ENCODE measurements at regions of chr4 and their contacts with region 1.

Region 1: GRCh38 chr4:123396307-123397143 is at the start of gene SPRY1:
- DNase-seq: peak; percentile 94
- H3K4me3 ChIP-seq: peak within 1 kb of the TSS; percentile 56 to 79 (median 64)
- H3K27ac ChIP-seq: peak within 1 kb of the TSS; percentile 59
- H3K4me1 ChIP-seq: peaks cover 5% of the 10 kb centered on the region
- H3K27me3 ChIP-seq: no peaks in the 10 kb centered on the region
- CTCF ChIP-seq: no peak
- total RNA-seq, gene SPRY1: 4.8 to 8.2 TPM

Region 2: DNA sequence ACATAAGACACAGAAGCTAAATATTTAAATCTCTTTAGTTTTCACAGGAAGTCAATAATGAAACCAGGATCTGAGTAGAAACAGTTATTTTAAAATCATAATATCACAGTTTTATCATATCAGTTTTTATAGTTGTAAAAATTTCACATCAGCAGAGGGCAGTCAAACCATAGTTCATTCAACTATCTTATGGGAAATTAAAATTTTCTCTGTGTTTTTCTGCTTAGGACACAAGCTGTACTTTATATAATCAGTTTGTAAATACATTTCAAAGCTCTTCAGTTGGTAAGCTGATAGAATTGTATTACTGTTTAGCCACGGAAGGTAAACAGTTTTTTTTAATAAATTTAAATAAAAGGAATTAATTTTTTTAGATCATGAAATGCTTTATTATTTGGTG is 269.3 kb before region 1 on chr4:
- CTCF ChIA-PET with region 1: interaction called, 3 read pairs
- dilution Hi-C with region 1: no loop called
- in situ Hi-C with region 1: loop called in 1 of 2 experiments (anchors 25 kb)
- intact Hi-C with region 1: loop called (anchors 1 kb)
- DNase-seq: peak; percentile 9
- H3K4me3 ChIP-seq: no peak overlapping the region
- H3K27ac ChIP-seq: peak overlapping the region; percentile 89
- H3K4me1 ChIP-seq: peaks cover 3% of the 10 kb centered on the region
- H3K27me3 ChIP-seq: no peaks in the 10 kb centered on the region
- CTCF ChIP-seq: peak; percentile 14 to 42

Region 3: GRCh38 chr4:123547216-123548165 is 151.0 kb after region 1 on chr4:
- CTCF ChIA-PET with region 1: no interaction called
- dilution Hi-C with region 1: no loop called
- in situ Hi-C with region 1: no loop called
- intact Hi-C with region 1: loop called (anchors 5 kb)
- DNase-seq: peak; percentile 56
- H3K4me3 ChIP-seq: peak overlapping the region in 1 of 3 experiments; percentile 4
- H3K27ac ChIP-seq: no peak overlapping the region
- H3K4me1 ChIP-seq: peaks cover 29% of the 10 kb centered on the region
- H3K27me3 ChIP-seq: no peaks in the 10 kb centered on the region
- CTCF ChIP-seq: no peak

Region 4: GRCh38 chr4:123599920-123600810 is 203.6 kb after region 1 on chr4:
- CTCF ChIA-PET with region 1: no interaction called
- dilution Hi-C with region 1: no loop called
- in situ Hi-C with region 1: no loop called
- intact Hi-C with region 1: no loop called
- DNase-seq: no peak
- H3K4me3 ChIP-seq: no peak overlapping the region
- H3K27ac ChIP-seq: no peak overlapping the region
- H3K4me1 ChIP-seq: peaks cover 41% of the 10 kb centered on the region
- H3K27me3 ChIP-seq: no peaks in the 10 kb centered on the region
- CTCF ChIP-seq: no peak

Region 5: DNA sequence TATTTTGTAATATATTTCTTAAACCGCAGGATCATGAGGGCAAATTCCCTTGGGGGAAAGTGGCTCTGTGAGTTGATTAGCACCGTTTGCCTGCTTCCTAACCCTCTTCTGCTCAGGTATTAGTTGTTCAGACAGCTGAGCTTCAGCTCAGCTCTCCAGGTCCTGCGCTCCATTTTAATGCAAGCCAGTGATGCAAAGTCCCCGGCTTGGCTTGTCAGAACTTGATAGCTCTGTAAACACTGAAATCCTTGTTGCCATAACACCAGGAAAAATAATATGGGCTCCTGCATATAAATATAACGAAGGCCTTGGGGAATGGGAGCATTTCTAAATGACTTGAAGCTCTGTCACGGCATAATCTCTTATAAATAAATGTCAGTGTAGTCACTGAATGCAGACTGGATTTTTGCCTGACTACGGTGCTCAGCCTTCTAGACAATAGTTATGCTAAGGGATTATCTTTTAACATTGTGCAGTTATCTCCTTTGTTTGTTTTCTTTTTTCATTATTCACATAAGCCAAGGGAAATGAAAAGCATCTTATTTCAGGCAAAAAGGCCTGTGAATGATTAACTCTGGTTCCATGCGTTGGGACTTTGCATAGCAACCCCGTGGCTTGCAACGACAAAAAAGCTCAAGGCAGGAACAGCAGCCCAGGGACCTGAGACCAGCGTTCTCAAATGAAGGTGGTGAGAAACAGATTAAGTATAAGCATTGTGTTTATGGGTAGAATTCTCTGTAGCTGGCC is 253.3 kb after region 1 on chr4:
- CTCF ChIA-PET with region 1: no interaction called
- dilution Hi-C with region 1: no loop called
- in situ Hi-C with region 1: loop called in 1 of 2 experiments (anchors 5 kb)
- intact Hi-C with region 1: no loop called
- DNase-seq: peak; percentile 94
- H3K4me3 ChIP-seq: no peak overlapping the region
- H3K27ac ChIP-seq: peak overlapping the region; percentile 94
- H3K4me1 ChIP-seq: peaks cover 26% of the 10 kb centered on the region
- H3K27me3 ChIP-seq: no peaks in the 10 kb centered on the region
- CTCF ChIP-seq: no peak

Region 6: GRCh38 chr4:123696687-123697086 is 300.2 kb after region 1 on chr4:
- CTCF ChIA-PET with region 1: no interaction called
- dilution Hi-C with region 1: no loop called
- in situ Hi-C with region 1: no loop called
- intact Hi-C with region 1: no loop called
- DNase-seq: no peak
- H3K4me3 ChIP-seq: no peak overlapping the region
- H3K27ac ChIP-seq: no peak overlapping the region
- H3K4me1 ChIP-seq: peaks cover 12% of the 10 kb centered on the region
- H3K27me3 ChIP-seq: no peaks in the 10 kb centered on the region
- CTCF ChIP-seq: no peak

Region 7: DNA sequence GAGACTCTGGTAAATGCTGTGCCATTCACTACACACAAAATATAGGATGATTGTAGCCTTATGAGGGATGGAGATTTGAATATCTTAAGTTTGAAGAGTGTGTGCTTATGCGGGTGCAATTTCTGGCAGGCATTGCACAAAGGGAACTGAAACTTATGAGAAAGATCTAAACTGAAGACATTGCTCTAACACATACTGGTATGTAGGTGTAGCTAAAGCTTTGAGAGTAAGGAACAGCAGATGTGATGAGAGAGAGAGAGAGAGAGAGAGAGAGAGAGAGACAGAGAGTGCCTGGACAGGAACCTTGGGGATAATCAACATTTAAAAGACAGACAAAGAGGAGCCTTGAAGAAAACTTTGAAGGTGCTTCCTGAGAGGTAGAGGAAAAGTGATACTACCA is 379.7 kb after region 1 on chr4:
- CTCF ChIA-PET with region 1: no interaction called
- dilution Hi-C with region 1: no loop called
- in situ Hi-C with region 1: no loop called
- intact Hi-C with region 1: loop called (anchors 10 kb)
- DNase-seq: no peak
- H3K4me3 ChIP-seq: no peak overlapping the region
- H3K27ac ChIP-seq: no peak overlapping the region
- H3K4me1 ChIP-seq: no peaks in the 10 kb centered on the region
- H3K27me3 ChIP-seq: no peaks in the 10 kb centered on the region
- CTCF ChIP-seq: no peak

Region 8: GRCh38 chr4:124262211-124263179 is 866.0 kb after region 1 on chr4:
- CTCF ChIA-PET with region 1: no interaction called
- dilution Hi-C with region 1: no loop called
- in situ Hi-C with region 1: no loop called
- intact Hi-C with region 1: loop called (anchors 5 kb)
- DNase-seq: peak; percentile 64
- H3K4me3 ChIP-seq: no peak overlapping the region
- H3K27ac ChIP-seq: no peak overlapping the region
- H3K4me1 ChIP-seq: no peaks in the 10 kb centered on the region
- H3K27me3 ChIP-seq: no peaks in the 10 kb centered on the region
- CTCF ChIP-seq: peak; percentile 90 to 93